Activated naive CD4-positive, alpha-beta T cell treated with anti-CD3 and anti-CD28 coated beads for 36 hours (primary cell): ENCODE measurements at regions of chr19 and their contacts with region 1.

Region 1: GRCh38 chr19:12495002-12495802 is 10.6 kb upstream of the ZNF709 start:
- DNase-seq: peak; percentile 98
- H3K4me3 Mint-ChIP-seq: peak overlapping the region; percentile 87
- H3K27ac Mint-ChIP-seq: peak overlapping the region; percentile 89
- H3K4me1 Mint-ChIP-seq: peaks cover 9% of the 10 kb centered on the region
- H3K27me3 Mint-ChIP-seq: no peaks in the 10 kb centered on the region

Region 2: GRCh38 chr19:12162882-12163806 is 332.1 kb before region 1 on chr19 and contains the start of gene ZNF136:
- CTCF ChIA-PET with region 1: interaction called, 3 read pairs
- intact Hi-C with region 1: loop called (anchors 2 kb)
- DNase-seq: peak; percentile 99
- H3K4me3 Mint-ChIP-seq: peak within 1 kb of the TSS; percentile 90
- H3K27ac Mint-ChIP-seq: peak within 1 kb of the TSS; percentile 91
- H3K4me1 Mint-ChIP-seq: peaks cover 42% of the 10 kb centered on the region
- H3K27me3 Mint-ChIP-seq: no peaks in the 10 kb centered on the region
- total RNA-seq, gene ZNF136: 8.4 to 11.6 TPM

Region 3: DNA sequence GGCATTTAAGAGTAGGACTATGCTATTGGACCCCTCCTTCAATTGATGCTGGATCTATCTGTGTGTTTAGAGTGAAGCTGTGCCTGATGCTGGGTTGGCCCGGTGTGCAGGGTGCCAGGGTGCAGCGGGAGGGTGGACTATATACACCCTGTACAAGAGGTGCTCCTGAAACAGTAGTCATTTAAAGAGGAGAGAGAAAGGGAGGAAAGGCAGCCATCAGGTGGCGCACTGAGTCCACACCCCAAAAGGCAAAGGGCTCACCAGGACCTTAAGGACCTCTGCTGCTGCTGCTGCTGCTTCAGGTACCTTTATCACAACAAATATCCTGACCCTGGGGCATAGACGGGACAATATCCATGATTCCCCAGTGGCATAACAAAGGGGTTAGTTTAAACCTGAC is 293.0 kb before region 1 on chr19:
- CTCF ChIA-PET with region 1: no interaction called
- intact Hi-C with region 1: loop called (anchors 5 kb)
- DNase-seq: peak; percentile 84
- H3K4me3 Mint-ChIP-seq: no peak overlapping the region
- H3K27ac Mint-ChIP-seq: no peak overlapping the region
- H3K4me1 Mint-ChIP-seq: peaks cover 22% of the 10 kb centered on the region
- H3K27me3 Mint-ChIP-seq: no peaks in the 10 kb centered on the region

Region 4: GRCh38 chr19:12400633-12401502 is 94.3 kb before region 1 on chr19 and contains the start of gene ZNF799:
- CTCF ChIA-PET with region 1: no interaction called
- intact Hi-C with region 1: loop called (anchors 1 kb)
- DNase-seq: peak; percentile 93
- H3K4me3 Mint-ChIP-seq: peak within 1 kb of the TSS; percentile 89
- H3K27ac Mint-ChIP-seq: peak within 1 kb of the TSS; percentile 56
- H3K4me1 Mint-ChIP-seq: peaks cover 8% of the 10 kb centered on the region
- H3K27me3 Mint-ChIP-seq: no peaks in the 10 kb centered on the region
- total RNA-seq, gene ZNF799: 3.3 to 3.6 TPM

Region 5: DNA sequence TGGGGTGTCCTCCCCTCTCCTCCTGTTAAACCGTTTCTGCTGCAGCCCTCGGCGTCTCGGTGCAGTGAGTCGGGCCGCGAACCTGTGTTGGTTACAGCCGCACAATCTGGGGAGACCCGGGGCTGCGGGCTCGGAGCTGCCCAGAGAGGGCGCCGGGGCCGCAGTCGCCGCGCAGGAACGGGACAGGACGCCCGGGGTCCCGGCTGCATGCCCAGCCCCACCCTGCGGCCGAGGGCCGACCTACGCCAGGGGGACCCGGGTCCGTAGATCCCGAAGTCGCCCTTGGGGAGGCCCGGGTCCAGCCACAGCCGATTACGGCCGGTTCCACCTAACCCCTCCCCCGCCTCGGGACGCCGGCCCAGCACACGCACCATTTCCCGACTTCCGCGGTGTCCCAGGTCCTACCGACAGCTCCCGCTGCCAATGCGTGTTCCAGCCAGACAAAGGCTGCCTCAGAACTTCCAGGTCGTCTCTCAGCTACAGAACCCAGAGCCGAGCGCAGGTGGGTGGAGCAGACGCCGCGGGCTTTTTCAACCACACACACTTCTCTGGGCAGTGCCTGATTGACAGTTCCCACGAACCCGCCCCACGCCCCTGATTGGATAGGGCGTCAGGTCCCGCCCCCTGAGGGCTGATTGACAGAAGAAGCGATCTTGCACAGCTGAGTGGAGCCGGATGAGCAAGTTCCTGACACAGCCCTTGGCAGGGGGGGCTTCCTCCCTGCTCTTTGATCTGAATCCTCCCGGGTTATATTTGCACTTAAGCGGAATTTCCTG is 54.5 kb before region 1 on chr19 and contains the start of gene ZNF443:
- CTCF ChIA-PET with region 1: no interaction called
- intact Hi-C with region 1: loop called (anchors 2 kb)
- DNase-seq: peak; percentile 100
- H3K4me3 Mint-ChIP-seq: peak within 1 kb of the TSS; percentile 100
- H3K27ac Mint-ChIP-seq: peak within 1 kb of the TSS; percentile 96
- H3K4me1 Mint-ChIP-seq: peaks cover 6% of the 10 kb centered on the region
- H3K27me3 Mint-ChIP-seq: no peaks in the 10 kb centered on the region
- total RNA-seq, gene ZNF443: 3.7 to 4.1 TPM

Region 6: GRCh38 chr19:12484371-12485051 is 10.7 kb before region 1 on chr19 and contains the start of gene ZNF709:
- CTCF ChIA-PET with region 1: interaction called, 8 read pairs
- intact Hi-C with region 1: loop called (anchors 1 kb)
- DNase-seq: peak; percentile 90
- H3K4me3 Mint-ChIP-seq: peak within 1 kb of the TSS; percentile 92
- H3K27ac Mint-ChIP-seq: peak within 1 kb of the TSS; percentile 30
- H3K4me1 Mint-ChIP-seq: peaks cover 30% of the 10 kb centered on the region
- H3K27me3 Mint-ChIP-seq: no peaks in the 10 kb centered on the region
- total RNA-seq, gene ZNF709: 1.9 to 2.4 TPM